Ascending aorta (tissue), 2 donors: ENCODE measurements at regions of chr20 and their contacts with region 1.

Region 1: GRCh38 chr20:32743237-32744112 is at the start of gene COMMD7:
- DNase-seq: peak in 1 of 2 donors; percentile 78
- H3K4me3 ChIP-seq: peak within 1 kb of the TSS; percentile 94 to 96
- H3K27ac ChIP-seq: peak within 1 kb of the TSS; percentile 89 to 92
- H3K4me1 ChIP-seq: peaks cover 0 to 12% of the 10 kb centered on the region in 2 donors
- H3K27me3 ChIP-seq: no peaks in the 10 kb centered on the region
- CTCF ChIP-seq: no peak
- total RNA-seq, gene COMMD7: 90.3 TPM

Region 2: DNA sequence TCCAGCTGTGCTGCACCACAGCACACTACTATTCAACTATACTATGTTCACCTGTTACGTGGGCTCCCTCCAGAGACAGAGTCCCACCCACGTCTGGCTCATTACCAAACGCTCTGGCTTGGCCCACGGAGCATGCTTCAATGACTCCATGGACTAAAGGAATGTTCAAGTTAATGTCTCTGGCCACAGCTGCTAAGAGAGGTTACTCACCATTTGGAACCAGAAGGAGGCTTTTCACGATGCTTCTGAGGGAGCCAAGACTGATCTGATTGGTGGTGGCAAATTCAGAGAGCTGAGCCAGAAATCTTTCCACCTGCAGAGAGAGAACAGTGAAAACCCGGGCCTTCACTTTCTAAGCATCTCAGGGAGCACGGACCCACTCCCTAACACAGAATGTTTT is 15.8 kb before region 1 on chr20:
- intact Hi-C with region 1: no loop called
- DNase-seq: no peak
- H3K4me3 ChIP-seq: no peak overlapping the region
- H3K27ac ChIP-seq: no peak overlapping the region
- H3K4me1 ChIP-seq: peaks cover 0 to 4% of the 10 kb centered on the region in 2 donors
- H3K27me3 ChIP-seq: no peaks in the 10 kb centered on the region
- CTCF ChIP-seq: no peak

Region 3: DNA sequence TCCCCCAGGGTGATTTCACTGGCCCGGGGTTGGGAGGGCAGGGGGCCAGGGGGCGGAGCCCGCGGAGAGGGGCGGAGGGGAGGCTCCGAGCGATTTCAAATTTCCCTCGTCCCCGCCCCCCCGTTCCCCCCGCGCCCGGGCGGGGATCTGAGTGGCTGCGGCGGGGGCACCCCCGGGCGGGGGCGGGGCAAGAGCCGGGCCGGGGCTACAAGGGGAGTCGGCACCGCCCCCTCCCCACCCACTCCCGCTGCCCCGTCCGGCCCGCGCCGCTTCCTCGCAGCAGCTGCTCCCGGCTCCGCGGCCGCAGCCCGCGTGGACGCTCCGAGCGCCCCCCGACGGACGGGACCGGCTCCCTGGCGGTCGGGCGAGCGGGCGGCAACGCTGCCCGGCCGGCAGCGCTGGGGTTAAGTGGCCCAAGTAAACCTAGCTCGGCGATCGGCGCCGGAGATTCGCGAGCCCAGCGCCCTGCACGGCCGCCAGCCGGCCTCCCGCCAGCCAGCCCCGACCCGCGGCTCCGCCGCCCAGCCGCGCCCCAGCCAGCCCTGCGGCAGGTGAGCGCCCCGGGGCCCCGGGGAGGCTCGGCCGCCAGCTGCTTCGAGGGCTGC is 18.8 kb after region 1 on chr20 and contains the start of gene DNMT3B:
- intact Hi-C with region 1: loop called (anchors 2 kb)
- DNase-seq: peak in 1 of 2 donors; percentile 88
- H3K4me3 ChIP-seq: peak within 1 kb of the TSS; percentile 84 to 92
- H3K27ac ChIP-seq: no peak within 1 kb of the TSS
- H3K4me1 ChIP-seq: peaks cover 10 to 14% of the 10 kb centered on the region in 2 donors
- H3K27me3 ChIP-seq: no peaks in the 10 kb centered on the region
- CTCF ChIP-seq: peak in 1 of 3 experiments; percentile 35
- total RNA-seq, gene DNMT3B: 0.75 TPM

Region 4: DNA sequence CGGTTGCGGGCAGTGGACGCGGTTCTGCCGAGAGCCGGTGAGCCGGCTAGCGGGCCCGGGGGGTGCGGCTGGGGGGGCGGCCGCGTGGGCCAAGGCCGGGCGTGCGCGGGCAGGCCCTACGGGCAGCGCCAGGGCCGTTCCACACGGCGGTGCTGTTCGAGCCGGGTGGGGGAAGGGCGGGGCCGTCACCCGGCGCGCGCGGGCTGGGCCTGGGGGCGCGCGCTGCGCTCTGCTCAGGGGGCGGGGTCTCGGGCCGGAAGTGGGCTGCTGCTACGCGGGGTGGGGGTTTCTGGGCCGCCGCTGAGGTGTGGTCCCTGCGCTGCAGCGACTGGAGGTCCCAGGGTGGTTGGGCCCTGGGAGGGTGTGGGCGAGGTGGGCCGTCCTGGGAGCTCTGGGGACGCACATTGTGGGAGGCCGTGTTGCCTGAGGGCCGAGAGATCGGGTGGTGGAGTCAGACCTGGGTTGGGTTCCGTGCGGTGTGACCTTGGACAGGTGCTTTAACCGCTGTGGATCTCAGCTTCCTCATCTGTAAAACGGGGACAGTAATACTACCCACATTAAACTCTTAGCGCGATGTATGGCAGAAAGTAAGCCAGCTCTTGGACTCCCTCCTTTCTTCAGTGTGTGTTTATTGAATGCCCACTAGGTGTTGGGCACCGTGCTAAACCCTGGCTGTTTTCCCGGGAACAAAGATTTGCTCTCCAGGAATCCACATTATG is 76.7 kb after region 1 on chr20:
- intact Hi-C with region 1: loop called (anchors 5 kb)
- DNase-seq: peak in 1 of 2 donors; percentile 68
- H3K4me3 ChIP-seq: peak overlapping the region; percentile 88 to 91
- H3K27ac ChIP-seq: peak overlapping the region; percentile 89 to 90
- H3K4me1 ChIP-seq: peaks cover 0 to 19% of the 10 kb centered on the region in 2 donors
- H3K27me3 ChIP-seq: no peaks in the 10 kb centered on the region
- CTCF ChIP-seq: no peak

Region 5: DNA sequence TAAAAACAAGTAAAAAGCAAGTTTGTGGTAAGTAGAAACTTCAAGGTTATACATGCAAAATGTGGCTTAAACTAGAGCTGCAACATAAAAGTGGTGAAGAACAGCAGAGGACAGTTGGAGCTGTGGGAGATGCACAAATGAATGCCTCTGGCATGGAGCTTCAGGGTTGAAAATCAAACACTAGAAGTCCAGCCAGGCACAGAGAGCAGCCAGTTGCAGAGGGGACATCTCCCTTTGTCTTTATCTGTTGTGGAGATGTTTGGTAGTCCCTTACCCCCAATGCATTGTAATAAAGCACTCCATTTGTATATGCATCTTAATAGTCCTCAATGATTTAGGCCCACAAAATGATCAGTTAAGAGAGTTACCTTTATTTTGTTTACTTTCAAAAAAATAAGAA is 845.6 kb after region 1 on chr20:
- intact Hi-C with region 1: no loop called
- DNase-seq: no peak
- H3K4me3 ChIP-seq: no peak overlapping the region
- H3K27ac ChIP-seq: no peak overlapping the region
- H3K4me1 ChIP-seq: peaks cover 3 to 7% of the 10 kb centered on the region in 2 donors
- H3K27me3 ChIP-seq: no peaks in the 10 kb centered on the region
- CTCF ChIP-seq: no peak